K562 (cell line): ENCODE measurements at regions of chr7 and their contacts with region 1.

Region 1: GRCh38 chr7:150753826-150754603 is 16.8 kb downstream of the GIMAP5 start:
- DNase-seq: peak in 3 of 4 experiments; percentile 25 to 56 (median 39)
- ATAC-seq: peak; percentile 92
- H3K4me3 ChIP-seq: no peak overlapping the region
- H3K27ac ChIP-seq: no peak overlapping the region
- H3K4me1 ChIP-seq: no peaks in the 10 kb centered on the region
- H3K27me3 ChIP-seq: peaks cover 5 to 17% of the 10 kb centered on the region in 2 experiments
- CTCF ChIP-seq: peak; percentile 71 to 82 (median 73)
- EP300 ChIP-seq: no peak
- POLR2A ChIP-seq: no peak
- RAD21 ChIP-seq: peak; percentile 73 to 81

Region 2: DNA sequence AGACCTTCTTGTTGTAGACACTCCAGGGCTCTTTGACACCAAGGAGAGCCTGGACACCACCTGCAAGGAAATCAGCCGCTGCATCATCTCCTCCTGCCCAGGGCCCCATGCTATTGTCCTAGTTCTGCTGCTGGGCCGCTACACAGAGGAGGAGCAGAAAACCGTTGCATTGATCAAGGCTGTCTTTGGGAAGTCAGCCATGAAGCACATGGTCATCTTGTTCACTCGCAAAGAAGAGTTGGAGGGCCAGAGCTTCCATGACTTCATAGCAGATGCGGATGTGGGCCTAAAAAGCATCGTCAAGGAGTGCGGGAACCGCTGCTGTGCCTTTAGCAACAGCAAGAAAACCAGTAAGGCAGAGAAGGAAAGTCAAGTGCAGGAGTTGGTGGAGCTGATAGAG is 233.9 kb before region 1 on chr7:
- CTCF ChIA-PET with region 1: no interaction called
- POLR2A ChIA-PET with region 1: no interaction called
- in situ Hi-C with region 1: no loop called
- intact Hi-C with region 1: loop called (anchors 10 kb)
- DNase-seq: no peak
- ATAC-seq: peak; percentile 38; the same call in 2 of the 3 replicates
- H3K4me3 ChIP-seq: no peak overlapping the region
- H3K27ac ChIP-seq: no peak overlapping the region
- H3K4me1 ChIP-seq: no peaks in the 10 kb centered on the region
- H3K27me3 ChIP-seq: peaks cover 7 to 10% of the 10 kb centered on the region in 2 experiments; a peak in 4 of 5 replicates
- CTCF ChIP-seq: no peak
- EP300 ChIP-seq: no peak
- POLR2A ChIP-seq: no peak
- RAD21 ChIP-seq: no peak

Region 3: GRCh38 chr7:151936207-151936606 is 1182.2 kb after region 1 on chr7:
- CTCF ChIA-PET with region 1: no interaction called
- POLR2A ChIA-PET with region 1: no interaction called
- in situ Hi-C with region 1: no loop called
- intact Hi-C with region 1: no loop called
- DNase-seq: no peak
- ATAC-seq: no peak
- H3K4me3 ChIP-seq: no peak overlapping the region
- H3K27ac ChIP-seq: no peak overlapping the region
- H3K4me1 ChIP-seq: peaks cover 0 to 3% of the 10 kb centered on the region in 2 experiments; a peak in 1 of 5 replicates
- H3K27me3 ChIP-seq: peaks cover 35 to 44% of the 10 kb centered on the region in 2 experiments
- CTCF ChIP-seq: no peak
- EP300 ChIP-seq: no peak
- POLR2A ChIP-seq: no peak
- RAD21 ChIP-seq: no peak